T-cell (primary cell): ENCODE measurements at regions of chr10 and their contacts with region 1.

Region 1: DNA sequence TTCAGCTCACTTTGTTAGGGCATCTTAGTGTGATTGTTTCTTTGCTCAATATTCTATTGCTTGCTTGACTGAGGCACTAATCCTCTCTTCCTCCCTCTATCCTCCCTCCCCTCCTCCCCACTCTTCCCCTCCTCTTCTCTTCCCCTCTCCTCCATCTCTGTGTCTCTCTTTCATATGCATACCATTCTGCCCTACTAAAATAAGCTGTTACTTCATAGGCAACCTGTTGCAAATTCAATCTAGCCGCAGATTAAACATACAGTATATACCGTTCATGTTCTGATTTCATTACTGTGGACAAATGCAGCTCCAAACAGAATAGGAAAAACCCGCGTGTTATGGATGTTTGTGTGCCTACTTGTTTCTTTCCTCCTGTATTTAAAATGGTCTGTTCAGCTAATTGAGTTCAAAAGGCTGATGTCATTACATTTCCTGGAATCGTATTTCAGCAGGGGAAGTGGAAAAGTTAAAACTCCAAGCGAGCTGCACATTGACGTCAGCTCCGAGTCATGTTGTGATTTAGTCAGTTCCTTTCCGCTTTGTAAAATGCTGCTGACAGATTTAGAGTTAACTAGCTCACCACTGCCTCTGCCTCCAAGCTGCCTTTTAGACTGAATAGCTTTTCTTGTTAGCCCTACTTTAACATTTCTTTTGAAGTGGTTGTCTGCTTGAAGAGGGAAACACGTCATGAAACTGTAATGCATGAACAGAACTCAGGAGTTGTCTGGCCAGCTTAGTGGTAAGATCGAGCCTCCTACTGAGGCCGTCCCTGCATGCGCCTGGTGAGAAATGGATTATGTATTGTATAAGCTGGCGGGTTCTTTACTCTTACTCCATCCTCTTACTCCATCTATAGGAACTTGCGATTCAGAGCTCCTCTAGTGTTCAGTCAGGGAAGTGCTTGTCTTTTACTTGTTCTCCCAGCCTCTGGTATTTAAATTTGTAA is 69.0 kb downstream of the CREM start:
- DNase-seq: peak; percentile 34 to 97 (median 83)
- ATAC-seq: peak; percentile 83 to 91 (median 89)
- H3K4me3 ChIP-seq: peak overlapping the region; percentile 44 to 45
- H3K4me3 Mint-ChIP-seq: peak overlapping the region; percentile 78 to 84 (median 84)
- H3K27ac ChIP-seq: peak overlapping the region; percentile 99
- H3K27ac Mint-ChIP-seq: peak overlapping the region; percentile 95 to 98
- H3K4me1 ChIP-seq: peaks cover 8 to 10% of the 10 kb centered on the region in 2 experiments
- H3K4me1 Mint-ChIP-seq: peaks cover 31 to 49% (median 34%) of the 10 kb centered on the region in 3 donors
- H3K27me3 ChIP-seq: no peaks in the 10 kb centered on the region
- H3K27me3 Mint-ChIP-seq: no peaks in the 10 kb centered on the region

Region 2: GRCh38 chr10:33764694-33765093 is 1430.9 kb before region 1 on chr10:
- CTCF ChIA-PET with region 1: no interaction called
- POLR2A ChIA-PET with region 1: no interaction called
- DNase-seq: no peak
- ATAC-seq: no peak
- H3K4me3 ChIP-seq: no peak overlapping the region
- H3K4me3 Mint-ChIP-seq: no peak overlapping the region
- H3K27ac ChIP-seq: no peak overlapping the region
- H3K27ac Mint-ChIP-seq: no peak overlapping the region
- H3K4me1 ChIP-seq: no peaks in the 10 kb centered on the region
- H3K4me1 Mint-ChIP-seq: no peaks in the 10 kb centered on the region
- H3K27me3 ChIP-seq: no peaks in the 10 kb centered on the region
- H3K27me3 Mint-ChIP-seq: peaks cover 0 to 3% of the 10 kb centered on the region in 2 donors

Region 3: GRCh38 chr10:34049887-34050286 is 1145.7 kb before region 1 on chr10:
- CTCF ChIA-PET with region 1: no interaction called
- POLR2A ChIA-PET with region 1: no interaction called
- DNase-seq: no peak
- ATAC-seq: no peak
- H3K4me3 ChIP-seq: no peak overlapping the region
- H3K4me3 Mint-ChIP-seq: no peak overlapping the region
- H3K27ac ChIP-seq: no peak overlapping the region
- H3K27ac Mint-ChIP-seq: no peak overlapping the region
- H3K4me1 ChIP-seq: no peaks in the 10 kb centered on the region
- H3K4me1 Mint-ChIP-seq: no peaks in the 10 kb centered on the region
- H3K27me3 ChIP-seq: no peaks in the 10 kb centered on the region
- H3K27me3 Mint-ChIP-seq: no peaks in the 10 kb centered on the region

Region 4: GRCh38 chr10:35090162-35090954 is 105.3 kb before region 1 on chr10 and contains the start of gene CUL2:
- CTCF ChIA-PET with region 1: interaction called in 1 of 2 experiments, 10 read pairs
- POLR2A ChIA-PET with region 1: interaction called, 3 to 23 read pairs
- DNase-seq: peak; percentile 83 to 94 (median 90)
- ATAC-seq: peak; percentile 94 to 98 (median 97)
- H3K4me3 ChIP-seq: peak within 1 kb of the TSS; percentile 76 to 93
- H3K4me3 Mint-ChIP-seq: peak within 1 kb of the TSS; percentile 93 to 98 (median 96)
- H3K27ac ChIP-seq: peak within 1 kb of the TSS; percentile 95
- H3K27ac Mint-ChIP-seq: peak within 1 kb of the TSS; percentile 93 to 98
- H3K4me1 ChIP-seq: peaks cover 20 to 37% of the 10 kb centered on the region in 2 experiments
- H3K4me1 Mint-ChIP-seq: peaks cover 47 to 53% (median 52%) of the 10 kb centered on the region in 3 donors
- H3K27me3 ChIP-seq: peaks cover 0 to 4% of the 10 kb centered on the region in 2 experiments
- H3K27me3 Mint-ChIP-seq: peaks cover 0 to 3% of the 10 kb centered on the region in 2 donors
- total RNA-seq, gene CUL2: 29.5 to 35.6 (median 31.2) TPM

Region 5: DNA sequence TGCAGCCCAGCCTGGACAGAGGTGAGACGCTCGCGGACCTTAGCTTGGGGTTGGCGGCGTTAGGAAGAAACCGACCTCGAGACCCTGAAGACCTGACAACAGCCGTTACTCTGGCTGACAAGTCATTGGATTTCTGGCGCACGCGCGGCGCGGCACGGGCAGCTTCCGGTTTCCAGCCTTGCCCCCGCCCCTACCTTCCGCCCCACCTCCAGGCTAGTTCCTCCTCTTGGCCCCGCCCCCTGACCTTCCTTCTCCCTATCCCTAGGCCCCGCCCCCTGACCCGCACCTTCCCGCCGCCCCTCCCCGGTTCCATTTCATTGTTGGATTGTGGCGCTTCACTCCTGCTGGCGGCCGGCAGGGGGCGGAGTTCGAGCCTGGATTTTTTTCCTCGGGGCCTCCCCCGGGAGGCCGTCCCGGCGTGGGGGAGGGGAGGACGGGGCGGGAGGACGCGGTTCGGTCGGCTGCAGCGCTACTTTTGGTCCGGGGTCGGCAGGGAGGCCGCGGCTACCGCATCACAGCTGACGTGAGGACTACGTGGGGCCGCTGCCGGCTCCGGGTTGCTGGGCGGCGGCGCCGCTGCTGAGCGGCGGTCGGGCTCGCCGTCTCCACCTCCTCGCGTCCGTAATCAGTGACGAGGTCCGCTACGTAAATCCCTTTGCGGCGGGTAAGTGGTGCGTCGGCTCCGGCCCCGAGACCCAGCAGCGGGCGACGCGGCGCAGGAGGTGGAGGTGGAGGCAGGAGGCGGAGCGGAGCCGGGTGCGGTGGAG is 68.9 kb before region 1 on chr10 and contains the start of gene CREM:
- CTCF ChIA-PET with region 1: interaction called, 13 to 253 read pairs
- POLR2A ChIA-PET with region 1: interaction called, 22 to 261 read pairs
- DNase-seq: peak; percentile 97 to 100 (median 99)
- ATAC-seq: peak; percentile 83 to 90 (median 88)
- H3K4me3 ChIP-seq: peak within 1 kb of the TSS; percentile 84 to 92
- H3K4me3 Mint-ChIP-seq: peak within 1 kb of the TSS; percentile 88 to 90 (median 89)
- H3K27ac ChIP-seq: peak within 1 kb of the TSS; percentile 100
- H3K27ac Mint-ChIP-seq: peak within 1 kb of the TSS; percentile 94 to 95
- H3K4me1 ChIP-seq: peaks cover 8 to 22% of the 10 kb centered on the region in 2 experiments
- H3K4me1 Mint-ChIP-seq: peaks cover 35 to 57% (median 38%) of the 10 kb centered on the region in 3 donors
- H3K27me3 ChIP-seq: no peaks in the 10 kb centered on the region
- H3K27me3 Mint-ChIP-seq: no peaks in the 10 kb centered on the region
- total RNA-seq, gene CREM: 20.6 to 57.2 (median 26.0) TPM

Region 6: DNA sequence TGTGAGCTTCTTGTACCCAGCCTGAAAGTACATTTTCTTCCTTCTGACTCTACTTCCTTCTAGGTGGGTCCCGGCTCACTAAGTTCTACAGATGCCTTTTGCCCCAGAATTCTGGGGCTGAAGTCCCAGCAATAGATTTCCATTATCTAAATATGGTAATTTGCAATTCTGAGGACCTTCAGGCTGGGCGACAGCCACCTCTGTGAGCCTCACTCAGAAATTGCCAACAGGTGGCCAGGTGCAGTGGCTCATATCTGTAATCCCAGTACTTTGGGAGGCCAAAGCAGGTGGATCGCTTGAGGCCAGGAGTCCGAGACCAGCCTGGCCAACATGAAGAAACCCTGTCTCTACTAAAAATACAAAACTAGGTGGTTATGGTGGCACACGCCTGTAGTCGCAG is 45.3 kb before region 1 on chr10:
- CTCF ChIA-PET with region 1: interaction called, 3 to 38 read pairs
- POLR2A ChIA-PET with region 1: interaction called, 5 to 42 read pairs
- DNase-seq: no peak
- ATAC-seq: no peak
- H3K4me3 ChIP-seq: no peak overlapping the region
- H3K4me3 Mint-ChIP-seq: peak overlapping the region in 2 of 3 donors; percentile 40 to 59
- H3K27ac ChIP-seq: peak overlapping the region; percentile 72
- H3K27ac Mint-ChIP-seq: peak overlapping the region; percentile 75 to 88
- H3K4me1 ChIP-seq: peaks cover 11 to 19% of the 10 kb centered on the region in 2 experiments
- H3K4me1 Mint-ChIP-seq: peaks cover 27 to 38% (median 37%) of the 10 kb centered on the region in 3 donors
- H3K27me3 ChIP-seq: no peaks in the 10 kb centered on the region
- H3K27me3 Mint-ChIP-seq: no peaks in the 10 kb centered on the region

Region 7: GRCh38 chr10:35208536-35208935 is 12.9 kb after region 1 on chr10:
- CTCF ChIA-PET with region 1: interaction called, 3 to 11 read pairs
- POLR2A ChIA-PET with region 1: interaction called, 9 to 13 read pairs
- DNase-seq: peak in 1 of 35 experiments; percentile 23
- ATAC-seq: peak in 3 of 4 experiments; percentile 23 to 60 (median 34)
- H3K4me3 ChIP-seq: no peak overlapping the region
- H3K4me3 Mint-ChIP-seq: peak overlapping the region; percentile 11 to 42 (median 17)
- H3K27ac ChIP-seq: peak overlapping the region; percentile 69
- H3K27ac Mint-ChIP-seq: peak overlapping the region; percentile 57 to 84
- H3K4me1 ChIP-seq: peaks cover 0 to 5% of the 10 kb centered on the region in 2 experiments
- H3K4me1 Mint-ChIP-seq: peaks cover 0 to 28% (median 17%) of the 10 kb centered on the region in 3 donors
- H3K27me3 ChIP-seq: no peaks in the 10 kb centered on the region
- H3K27me3 Mint-ChIP-seq: no peaks in the 10 kb centered on the region

Region 8: DNA sequence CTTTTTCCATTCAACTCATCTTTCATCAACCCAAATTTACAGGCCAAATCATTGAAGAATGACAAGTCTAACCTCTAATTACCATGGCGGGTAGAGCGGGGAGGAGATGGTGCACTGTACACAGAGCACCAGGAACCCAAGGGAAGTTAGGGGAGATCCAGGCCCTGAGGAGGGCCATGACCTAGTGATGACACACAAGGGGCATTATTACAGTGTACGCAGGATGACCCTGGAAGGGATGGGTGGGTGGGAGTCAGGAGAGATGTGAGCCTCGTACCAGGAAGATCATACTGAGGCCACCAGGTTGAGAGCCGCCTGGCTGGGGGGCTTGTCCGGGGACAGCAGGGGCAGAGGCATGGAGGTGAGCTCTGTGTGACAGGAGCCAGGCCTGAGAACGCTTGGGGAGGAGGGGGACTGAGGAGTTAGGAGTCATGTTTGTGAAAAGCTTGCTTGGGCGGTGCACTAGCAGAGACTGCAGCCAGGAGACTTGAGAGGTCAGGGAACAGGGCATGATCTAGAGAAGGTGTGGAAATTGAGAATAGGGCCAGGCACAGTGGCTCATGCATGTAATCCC is 51.2 kb after region 1 on chr10:
- CTCF ChIA-PET with region 1: no interaction called
- POLR2A ChIA-PET with region 1: no interaction called
- DNase-seq: no peak
- ATAC-seq: no peak
- H3K4me3 ChIP-seq: no peak overlapping the region
- H3K4me3 Mint-ChIP-seq: no peak overlapping the region
- H3K27ac ChIP-seq: no peak overlapping the region
- H3K27ac Mint-ChIP-seq: no peak overlapping the region
- H3K4me1 ChIP-seq: no peaks in the 10 kb centered on the region
- H3K4me1 Mint-ChIP-seq: no peaks in the 10 kb centered on the region
- H3K27me3 ChIP-seq: peaks cover 0 to 6% of the 10 kb centered on the region in 2 experiments
- H3K27me3 Mint-ChIP-seq: peaks cover 0 to 6% of the 10 kb centered on the region in 2 donors

Region 9: GRCh38 chr10:35257057-35257983 is 61.7 kb after region 1 on chr10:
- CTCF ChIA-PET with region 1: no interaction called
- POLR2A ChIA-PET with region 1: interaction called in 1 of 2 experiments, 11 read pairs
- DNase-seq: no peak
- ATAC-seq: no peak
- H3K4me3 ChIP-seq: no peak overlapping the region
- H3K4me3 Mint-ChIP-seq: no peak overlapping the region
- H3K27ac ChIP-seq: no peak overlapping the region
- H3K27ac Mint-ChIP-seq: no peak overlapping the region
- H3K4me1 ChIP-seq: no peaks in the 10 kb centered on the region
- H3K4me1 Mint-ChIP-seq: no peaks in the 10 kb centered on the region
- H3K27me3 ChIP-seq: peaks cover 0 to 3% of the 10 kb centered on the region in 2 experiments
- H3K27me3 Mint-ChIP-seq: no peaks in the 10 kb centered on the region